ENCODE measurements at regions of chr5 and their contacts with region 1.

Region 1: GRCh38 chr5:84506625-84507024 is 121.9 kb upstream of the EDIL3 start:
- DNase-seq: no peak
- ATAC-seq: no peak
- H3K4me3 ChIP-seq: no peak overlapping the region
- H3K27ac ChIP-seq: no peak overlapping the region
- H3K4me1 ChIP-seq: no peaks in the 10 kb centered on the region
- H3K27me3 ChIP-seq: no peaks in the 10 kb centered on the region
- CTCF ChIP-seq: no peak
- POLR2A ChIP-seq: no peak
- RAD21 ChIP-seq: no peak

Region 2: GRCh38 chr5:84524491-84524890 is 17.9 kb after region 1 on chr5:
- CTCF ChIA-PET with region 1: no interaction called
- POLR2A ChIA-PET with region 1: no interaction called
- RAD21 ChIA-PET with region 1: no interaction called
- intact Hi-C with region 1: loop called (anchors 1 kb)
- DNase-seq: no peak
- ATAC-seq: no peak
- H3K4me3 ChIP-seq: no peak overlapping the region
- H3K27ac ChIP-seq: no peak overlapping the region
- H3K4me1 ChIP-seq: no peaks in the 10 kb centered on the region; a peak in 1 of 4 replicates
- H3K27me3 ChIP-seq: no peaks in the 10 kb centered on the region
- CTCF ChIP-seq: no peak
- POLR2A ChIP-seq: no peak
- RAD21 ChIP-seq: no peak